HepG2 (cell line): ENCODE measurements at regions of chr7 and their contacts with region 1.

Region 1: DNA sequence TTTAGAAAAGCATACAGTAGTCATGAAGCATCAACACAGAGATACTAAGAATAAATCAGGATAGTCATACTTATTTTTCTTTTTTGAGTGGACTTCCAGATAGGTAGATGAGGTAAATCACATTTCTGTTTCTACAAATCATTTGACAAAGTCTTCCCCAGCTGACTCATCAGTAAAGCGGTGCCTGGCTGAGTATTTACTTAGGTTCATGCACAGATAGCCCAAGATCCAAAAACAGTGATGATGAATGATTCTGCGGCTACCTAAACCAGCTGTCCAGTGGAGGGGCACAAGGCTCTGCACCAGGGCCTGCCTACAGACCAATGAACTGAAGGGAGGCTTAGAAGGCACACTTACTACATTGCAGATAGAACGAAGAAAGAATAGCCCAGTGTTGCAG is 113.1 kb downstream of the PARP12 start:
- DNase-seq: no peak
- ATAC-seq: no peak
- H3K4me3 ChIP-seq: no peak overlapping the region
- H3K27ac ChIP-seq: no peak overlapping the region
- H3K4me1 ChIP-seq: peaks cover 23% of the 10 kb centered on the region
- H3K27me3 ChIP-seq: peaks cover 0 to 7% of the 10 kb centered on the region in 2 experiments; a peak in 3 of 5 replicates
- CTCF ChIP-seq: no peak
- EP300 ChIP-seq: no peak
- POLR2A ChIP-seq: no peak
- RAD21 ChIP-seq: no peak

Region 2: DNA sequence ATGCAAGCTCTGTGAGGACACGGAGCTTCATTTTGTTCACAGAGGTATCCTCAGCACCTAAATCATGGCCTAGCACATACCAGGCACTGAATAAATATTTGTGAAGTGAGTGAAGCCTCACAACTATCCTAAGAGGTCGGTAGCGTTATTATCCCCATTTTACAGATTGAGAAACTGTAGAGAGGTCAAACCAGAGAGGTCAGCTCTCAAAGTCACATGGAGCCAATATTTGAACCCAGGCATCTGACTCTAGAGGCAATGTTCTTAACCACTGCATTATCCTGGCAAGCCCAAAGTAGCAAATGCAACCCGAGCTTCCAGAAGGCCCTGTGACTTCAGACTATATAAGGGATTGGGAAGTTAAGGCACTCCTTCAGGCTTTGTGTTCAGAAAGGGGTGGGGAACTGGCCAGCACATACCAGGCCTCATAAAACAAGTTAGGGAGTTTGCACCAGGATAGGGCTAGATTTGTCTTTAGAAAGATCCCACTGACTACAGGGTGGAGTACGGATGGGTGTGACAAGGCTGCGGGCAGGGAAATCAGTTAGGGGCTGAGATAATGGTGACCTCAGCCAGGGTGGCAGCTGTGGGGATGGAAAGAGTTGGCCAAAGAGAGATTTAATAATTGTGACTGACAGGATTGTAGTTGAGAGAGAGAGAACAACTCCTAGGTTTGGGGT is 19.2 kb before region 1 on chr7:
- CTCF ChIA-PET with region 1: no interaction called
- POLR2A ChIA-PET with region 1: no interaction called
- in situ Hi-C with region 1: no loop called
- intact Hi-C with region 1: loop called (anchors 2 kb)
- DNase-seq: no peak
- ATAC-seq: no peak
- H3K4me3 ChIP-seq: no peak overlapping the region
- H3K27ac ChIP-seq: no peak overlapping the region
- H3K4me1 ChIP-seq: no peaks in the 10 kb centered on the region
- H3K27me3 ChIP-seq: no peaks in the 10 kb centered on the region
- CTCF ChIP-seq: no peak
- EP300 ChIP-seq: no peak
- POLR2A ChIP-seq: no peak
- RAD21 ChIP-seq: no peak